GM10248 (cell line): ENCODE measurements at regions of chr3 and their contacts with region 1.

Region 1: DNA sequence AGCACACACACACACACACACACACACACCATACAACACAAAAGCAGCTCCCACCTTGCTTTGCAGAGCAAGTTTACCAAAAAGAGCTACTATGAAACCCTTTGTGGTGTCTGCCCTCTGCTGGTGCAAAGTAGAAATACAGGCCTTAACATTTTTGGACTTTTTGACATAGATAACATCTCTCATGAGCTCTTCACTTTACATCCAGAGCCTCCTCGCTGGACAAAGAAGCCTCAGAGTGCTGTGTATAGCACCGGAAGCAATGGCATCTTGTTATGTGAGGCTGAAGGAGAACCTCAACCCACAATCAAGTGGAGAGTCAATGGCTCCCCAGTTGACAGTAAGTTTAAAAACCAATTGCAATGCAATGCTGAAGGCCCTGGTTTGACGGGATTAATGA is 157.9 kb downstream of the CHL1 start:
- DNase-seq: peak; percentile 31
- CTCF ChIP-seq: peak; percentile 75

Region 2: GRCh38 chr3:46576-46975 is 307.9 kb before region 1 on chr3:
- CTCF ChIA-PET with region 1: interaction called, 118 read pairs
- POLR2A ChIA-PET with region 1: no interaction called
- DNase-seq: no peak
- CTCF ChIP-seq: no peak

Region 3: GRCh38 chr3:111143-112069 is 243.0 kb before region 1 on chr3:
- CTCF ChIA-PET with region 1: no interaction called
- POLR2A ChIA-PET with region 1: no interaction called
- DNase-seq: peak; percentile 3
- CTCF ChIP-seq: no peak

Region 4: GRCh38 chr3:330494-331115 is 23.8 kb before region 1 on chr3:
- CTCF ChIA-PET with region 1: interaction called, 14 read pairs
- POLR2A ChIA-PET with region 1: no interaction called
- DNase-seq: no peak
- CTCF ChIP-seq: no peak

Region 5: DNA sequence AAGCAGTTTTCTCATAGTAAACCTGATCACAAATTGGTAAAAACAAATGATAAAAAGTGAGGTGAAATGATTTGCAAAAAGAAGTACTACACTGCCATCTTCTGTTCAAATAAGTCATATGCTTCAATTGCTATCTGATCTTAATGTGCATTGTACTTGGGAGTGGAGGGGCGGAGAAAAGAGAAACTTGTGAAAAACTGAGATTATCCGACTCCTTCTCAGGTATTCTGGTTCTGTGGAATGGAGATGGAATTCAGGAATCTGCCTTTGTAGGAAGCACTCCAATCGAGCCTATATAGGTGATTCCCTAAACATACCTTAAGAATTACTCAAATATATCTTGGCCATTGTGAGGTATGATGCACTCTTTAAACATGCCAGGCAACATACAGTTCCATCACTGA is 22.7 kb after region 1 on chr3:
- CTCF ChIA-PET with region 1: interaction called, 28 read pairs
- POLR2A ChIA-PET with region 1: no interaction called
- DNase-seq: peak; percentile 15
- CTCF ChIP-seq: peak; percentile 53